Heart left ventricle (tissue), 16 donors: ENCODE measurements at regions of chr6 and their contacts with region 1.

Region 1: GRCh38 chr6:162727309-162728182 is at the starts of genes PACRG and PRKN:
- DNase-seq: peak; percentile 99
- ATAC-seq: peak; percentile 96 to 99 (median 99)
- H3K4me3 ChIP-seq: peak within 1 kb of the TSS; percentile 86 to 94 (median 90)
- H3K27ac ChIP-seq: peak within 1 kb of the TSS; percentile 88 to 98 (median 95)
- H3K4me1 ChIP-seq: peaks cover 0 to 39% (median 13%) of the 10 kb centered on the region in 12 donors
- H3K27me3 ChIP-seq: no peaks in the 10 kb centered on the region
- CTCF ChIP-seq: no peak
- POLR2A ChIP-seq: peak; percentile 96 to 99
- total RNA-seq, gene PACRG: 3.2 to 83.3 (median 11.9) TPM
- total RNA-seq, gene PRKN: 19.1 to 32.5 (median 22.5) TPM

Region 2: GRCh38 chr6:162187168-162187935 is 540.2 kb before region 1 on chr6:
- intact Hi-C with region 1: loop called in 3 of 10 experiments (anchors 5 to 10 kb)
- DNase-seq: peak in 3 of 5 donors; percentile 29 to 43 (median 31)
- ATAC-seq: peak; percentile 96 to 97 (median 96)
- H3K4me3 ChIP-seq: no peak overlapping the region
- H3K27ac ChIP-seq: peak overlapping the region; percentile 55 to 94 (median 80)
- H3K4me1 ChIP-seq: peaks cover 0 to 31% (median 6%) of the 10 kb centered on the region in 12 donors
- H3K27me3 ChIP-seq: no peaks in the 10 kb centered on the region
- CTCF ChIP-seq: no peak
- POLR2A ChIP-seq: no peak

Region 3: GRCh38 chr6:162442687-162443086 is 284.9 kb before region 1 on chr6:
- intact Hi-C with region 1: loop called in 7 of 10 experiments (anchors 5 to 10 kb)
- DNase-seq: no peak
- ATAC-seq: peak; percentile 74 to 84 (median 77)
- H3K4me3 ChIP-seq: no peak overlapping the region
- H3K27ac ChIP-seq: no peak overlapping the region
- H3K4me1 ChIP-seq: peaks cover 0 to 2% (median 0%) of the 10 kb centered on the region in 12 donors
- H3K27me3 ChIP-seq: no peaks in the 10 kb centered on the region
- CTCF ChIP-seq: peak; percentile 22 to 54 (median 43)
- POLR2A ChIP-seq: no peak

Region 4: GRCh38 chr6:162538643-162539064 is 188.9 kb before region 1 on chr6:
- intact Hi-C with region 1: loop called in 2 of 10 experiments (anchors 5 to 10 kb)
- DNase-seq: peak; percentile 74 to 88 (median 79)
- ATAC-seq: peak; percentile 77 to 89 (median 86)
- H3K4me3 ChIP-seq: peak overlapping the region in 1 of 12 donors; percentile 6
- H3K27ac ChIP-seq: peak overlapping the region in 9 of 12 donors; percentile 14 to 75 (median 38)
- H3K4me1 ChIP-seq: peaks cover 0 to 18% (median 7%) of the 10 kb centered on the region in 12 donors
- H3K27me3 ChIP-seq: no peaks in the 10 kb centered on the region
- CTCF ChIP-seq: no peak
- POLR2A ChIP-seq: no peak

Region 5: GRCh38 chr6:162670345-162670744 is 57.2 kb before region 1 on chr6:
- intact Hi-C with region 1: loop called in 1 of 10 experiments (anchors 2 kb)
- DNase-seq: peak in 2 of 5 donors; percentile 16 to 28
- ATAC-seq: peak; percentile 82 to 92 (median 90)
- H3K4me3 ChIP-seq: peak overlapping the region in 3 of 12 donors; percentile 15 to 24 (median 20)
- H3K27ac ChIP-seq: peak overlapping the region; percentile 42 to 84 (median 76)
- H3K4me1 ChIP-seq: peaks cover 0 to 9% (median 0%) of the 10 kb centered on the region in 12 donors
- H3K27me3 ChIP-seq: no peaks in the 10 kb centered on the region
- CTCF ChIP-seq: no peak
- POLR2A ChIP-seq: no peak

Region 6: GRCh38 chr6:163413345-163414116 is 686.0 kb after region 1 on chr6:
- intact Hi-C with region 1: loop called in 2 of 10 experiments (anchors 10 kb)
- DNase-seq: peak; percentile 90 to 95 (median 93)
- ATAC-seq: peak; percentile 71 to 93 (median 90)
- H3K4me3 ChIP-seq: peak overlapping the region; percentile 69 to 93 (median 78)
- H3K27ac ChIP-seq: peak overlapping the region; percentile 95 to 100 (median 99)
- H3K4me1 ChIP-seq: peaks cover 0 to 26% (median 6%) of the 10 kb centered on the region in 12 donors
- H3K27me3 ChIP-seq: no peaks in the 10 kb centered on the region
- CTCF ChIP-seq: no peak
- POLR2A ChIP-seq: peak in 1 of 2 donors; percentile 83